Activated CD8-positive, alpha-beta T cell treated with anti-CD3 and anti-CD28 coated beads for 36 hours (primary cell): ENCODE measurements at regions of chrX and their contacts with region 1.

Region 1: DNA sequence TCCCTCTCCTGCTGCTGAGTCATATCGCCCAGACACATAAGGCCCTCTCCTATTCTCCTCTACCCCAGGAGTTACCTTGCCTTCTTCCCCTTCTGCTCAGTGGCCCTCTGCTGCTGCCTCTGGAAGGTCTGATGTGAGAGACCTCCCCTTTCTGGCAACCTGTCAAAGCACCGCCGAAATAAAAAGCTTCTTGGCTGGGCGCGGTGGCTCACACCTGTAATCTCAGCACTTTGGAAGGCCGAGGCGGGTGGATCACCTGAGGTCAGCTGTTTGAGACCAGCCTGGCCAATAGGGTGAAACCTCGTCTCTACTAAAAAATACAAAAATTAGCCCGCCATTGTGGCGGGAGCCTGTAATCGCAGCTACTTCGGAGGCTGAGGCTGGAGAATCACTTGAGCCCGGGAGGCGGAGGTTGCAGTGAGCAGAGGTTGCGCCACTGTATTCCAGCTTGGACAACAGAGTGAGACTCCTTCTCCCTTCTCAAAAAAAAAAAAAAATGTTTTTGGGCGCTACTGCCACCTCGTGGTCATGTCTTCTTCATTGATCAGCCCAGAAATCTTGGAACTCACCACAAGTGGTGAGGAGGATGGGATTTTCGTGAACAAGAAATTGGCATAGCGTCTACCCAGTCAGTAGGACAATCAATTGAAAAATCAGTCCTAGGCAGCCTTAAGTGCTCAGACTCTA is 8.6 kb upstream of the ZXDA start:
- DNase-seq: peak; percentile 16
- ATAC-seq: no peak
- H3K4me3 Mint-ChIP-seq: no peak overlapping the region
- H3K27ac Mint-ChIP-seq: no peak overlapping the region
- H3K4me1 Mint-ChIP-seq: no peaks in the 10 kb centered on the region
- H3K27me3 Mint-ChIP-seq: no peaks in the 10 kb centered on the region
- CTCF ChIP-seq: peak; percentile 30

Region 2: DNA sequence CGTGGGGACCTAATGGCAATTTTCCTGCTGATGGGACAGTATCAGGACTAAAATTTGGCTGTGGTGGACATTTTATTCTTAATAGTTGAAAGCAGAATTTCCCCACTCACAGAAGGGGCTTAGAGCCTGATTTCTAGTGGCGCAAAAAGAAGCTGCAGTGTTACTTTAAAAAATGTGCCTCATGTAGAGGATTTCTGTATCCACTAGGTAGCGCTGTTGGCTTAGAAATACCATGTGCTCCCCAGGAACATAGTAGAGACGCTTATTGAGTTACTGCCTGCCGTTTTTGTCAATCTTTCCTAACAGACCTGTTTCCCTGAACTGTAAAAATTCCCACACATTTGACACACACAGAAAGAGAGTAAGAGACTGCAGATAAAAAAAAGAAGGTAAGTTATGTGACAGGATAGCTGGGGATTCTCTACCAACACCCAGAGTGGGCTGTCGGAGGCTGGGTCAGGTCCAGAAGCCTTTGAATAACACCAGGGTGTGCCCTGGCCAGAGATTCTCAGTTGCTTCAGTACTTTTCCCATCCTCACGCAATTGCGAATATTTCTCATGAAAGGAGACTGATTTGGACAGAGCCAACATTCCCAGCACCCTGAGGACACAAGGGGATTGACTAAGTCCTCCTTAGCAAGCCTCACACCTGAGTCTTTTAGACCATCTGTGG is 97.1 kb before region 1 on chrX:
- CTCF ChIA-PET with region 1: interaction called, 3 read pairs
- POLR2A ChIA-PET with region 1: no interaction called
- intact Hi-C with region 1: loop called (anchors 5 kb)
- DNase-seq: peak; percentile 33
- ATAC-seq: peak; percentile 55
- H3K4me3 Mint-ChIP-seq: no peak overlapping the region
- H3K27ac Mint-ChIP-seq: no peak overlapping the region
- H3K4me1 Mint-ChIP-seq: peaks cover 2% of the 10 kb centered on the region
- H3K27me3 Mint-ChIP-seq: peaks cover 1% of the 10 kb centered on the region
- CTCF ChIP-seq: peak; percentile 52

Region 3: DNA sequence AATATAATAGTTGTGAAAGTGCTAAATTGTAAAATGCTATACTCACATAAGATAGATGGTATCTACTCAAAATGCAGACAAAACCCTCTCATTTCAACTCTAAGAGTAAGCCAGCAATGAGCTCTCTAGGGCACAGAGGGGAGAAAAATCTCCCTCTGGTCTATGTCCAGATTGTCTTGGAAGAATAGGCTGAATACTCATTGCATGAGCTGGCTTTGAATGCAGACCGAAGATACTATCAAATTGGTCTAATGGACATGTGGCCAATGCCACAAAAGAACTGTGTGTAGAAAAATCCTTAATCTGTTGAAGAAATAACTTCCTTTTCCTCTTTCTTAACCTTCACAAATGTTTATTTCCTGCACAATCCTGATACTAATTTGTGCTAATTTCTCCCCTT is 12.1 kb before region 1 on chrX:
- CTCF ChIA-PET with region 1: no interaction called
- POLR2A ChIA-PET with region 1: no interaction called
- intact Hi-C with region 1: no loop called
- DNase-seq: no peak
- ATAC-seq: no peak
- H3K4me3 Mint-ChIP-seq: peak overlapping the region; percentile 52
- H3K27ac Mint-ChIP-seq: peak overlapping the region; percentile 42
- H3K4me1 Mint-ChIP-seq: peaks cover 29% of the 10 kb centered on the region
- H3K27me3 Mint-ChIP-seq: no peaks in the 10 kb centered on the region
- CTCF ChIP-seq: no peak

Region 4: DNA sequence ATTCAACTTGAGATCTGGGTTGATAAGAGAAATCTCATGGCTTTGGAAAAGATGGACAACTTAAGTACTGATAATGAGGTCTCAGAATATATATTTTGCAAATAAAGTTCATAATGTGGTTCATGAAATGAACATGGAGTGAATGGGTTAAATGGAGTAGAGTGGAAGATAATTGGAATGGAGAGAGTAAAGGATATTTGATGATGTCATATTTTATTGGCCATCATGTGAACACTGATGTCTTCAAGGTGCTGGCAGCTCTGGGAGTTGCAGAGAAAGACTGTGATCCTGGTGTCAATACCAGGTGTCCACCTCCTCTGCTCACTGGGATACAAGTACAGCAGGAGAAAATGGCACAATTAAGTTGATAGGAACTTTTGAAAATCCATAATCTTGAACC is 125.3 kb after region 1 on chrX:
- CTCF ChIA-PET with region 1: no interaction called
- POLR2A ChIA-PET with region 1: no interaction called
- intact Hi-C with region 1: no loop called
- DNase-seq: no peak
- ATAC-seq: no peak
- H3K4me3 Mint-ChIP-seq: no peak overlapping the region
- H3K27ac Mint-ChIP-seq: no peak overlapping the region
- H3K4me1 Mint-ChIP-seq: no peaks in the 10 kb centered on the region
- H3K27me3 Mint-ChIP-seq: peaks cover 1% of the 10 kb centered on the region
- CTCF ChIP-seq: no peak